ENCODE measurements at regions of chr10 and their contacts with region 1.

Region 1: DNA sequence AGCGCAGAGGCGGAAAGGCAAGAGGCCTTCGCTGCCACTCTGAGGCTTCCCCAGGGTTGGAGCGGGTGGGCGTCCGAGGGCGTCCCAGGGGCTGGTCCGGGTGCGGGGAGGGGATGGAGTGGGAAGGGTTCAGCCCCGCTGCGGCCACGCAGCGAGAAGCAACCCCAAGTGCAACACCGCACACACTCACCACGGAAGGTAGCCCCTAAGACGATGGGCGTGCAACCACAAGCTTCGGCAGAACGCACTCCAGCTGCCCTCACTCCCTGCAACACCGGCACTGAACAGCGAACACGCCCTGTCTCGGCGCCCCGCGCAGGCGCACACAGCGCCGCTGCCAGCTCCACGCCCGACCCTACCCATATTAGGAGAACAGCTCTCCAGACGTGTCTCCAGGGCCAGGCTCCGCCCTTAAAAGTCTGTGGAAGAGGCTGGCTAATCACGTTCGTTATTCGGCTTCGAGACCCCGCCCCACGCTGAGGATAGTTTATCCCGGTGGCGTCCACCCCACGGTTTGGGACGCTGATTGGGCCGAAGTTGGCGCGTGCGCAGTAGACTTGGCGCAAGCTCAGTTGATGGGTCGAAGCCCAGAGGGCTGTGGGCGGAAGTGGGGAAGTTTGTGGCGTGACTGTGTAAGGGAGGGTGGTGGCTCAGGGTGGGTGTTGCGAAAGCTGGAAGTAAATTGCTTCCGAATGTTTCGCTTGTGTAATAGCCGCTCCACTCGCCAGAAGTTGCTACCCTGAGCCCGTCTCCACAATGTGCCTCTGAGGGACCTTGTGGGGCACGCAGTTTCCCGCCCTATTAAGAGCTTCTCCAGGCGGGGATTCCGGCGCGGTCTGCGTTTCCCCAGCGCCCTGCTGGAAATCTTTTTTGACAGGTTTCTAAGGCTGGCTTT is at the start of gene RSU1:
- DNase-seq: peak; percentile 99 to 100 (median 100)
- ATAC-seq: peak; percentile 99
- H3K4me3 ChIP-seq: peak within 1 kb of the TSS; percentile 66
- H3K4me3 Mint-ChIP-seq: peak within 1 kb of the TSS; percentile 88 to 98 (median 93)
- H3K27ac ChIP-seq: peak within 1 kb of the TSS; percentile 79
- H3K27ac Mint-ChIP-seq: peak within 1 kb of the TSS; percentile 84 to 96 (median 94)
- H3K4me1 ChIP-seq: peaks cover 8 to 28% of the 10 kb centered on the region in 2 donors
- H3K4me1 Mint-ChIP-seq: peaks cover 25 to 50% (median 46%) of the 10 kb centered on the region in 7 donors
- H3K27me3 ChIP-seq: no peaks in the 10 kb centered on the region
- H3K27me3 Mint-ChIP-seq: peaks cover 0 to 15% (median 0%) of the 10 kb centered on the region in 5 donors
- total RNA-seq, gene RSU1: 36.1 to 86.7 (median 48.7) TPM

Region 2: DNA sequence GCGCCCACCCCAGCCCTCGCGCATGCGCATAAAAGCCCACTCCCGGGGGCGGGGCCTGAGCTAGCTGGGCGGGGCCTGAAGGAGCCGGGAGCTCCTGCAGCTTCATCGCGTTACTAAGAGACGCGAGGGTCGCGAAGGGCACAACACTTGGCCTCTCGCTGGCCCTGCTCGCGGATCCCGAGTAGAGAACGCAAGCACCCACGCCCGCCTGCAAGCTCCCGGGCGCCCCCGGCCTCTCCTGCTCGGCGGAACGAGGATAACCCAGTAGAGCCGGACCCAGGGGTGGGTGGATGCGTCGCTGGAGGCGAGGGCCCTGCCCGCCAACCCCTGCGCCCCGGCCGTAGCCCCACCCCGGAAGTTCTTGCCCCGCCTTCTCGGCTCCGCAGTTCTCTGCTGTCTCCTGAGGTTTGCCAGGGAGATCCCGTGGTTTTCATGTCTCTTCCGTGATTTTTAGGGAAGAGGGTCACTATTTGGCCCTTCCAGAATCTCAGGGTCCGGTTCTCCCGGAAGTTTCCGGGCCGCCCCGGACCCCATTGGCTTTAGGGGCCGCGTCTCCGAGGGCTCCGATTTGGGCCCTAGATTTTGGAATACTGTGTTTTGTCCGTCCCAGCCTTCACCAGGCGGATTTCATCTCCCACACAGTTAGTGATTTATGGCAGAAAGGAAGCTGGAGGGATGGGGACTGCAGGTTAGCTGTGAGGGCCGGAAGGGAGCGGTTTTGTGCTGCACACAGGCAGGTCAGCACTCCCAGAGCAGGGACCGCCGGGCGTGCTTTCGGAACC is 1857.9 kb before region 1 on chr10 and contains the start of gene MEIG1:
- CTCF ChIA-PET with region 1: no interaction called
- POLR2A ChIA-PET with region 1: no interaction called
- intact Hi-C with region 1: loop called in 1 of 2 experiments (anchors 10 kb)
- DNase-seq: peak; percentile 82 to 99 (median 90)
- ATAC-seq: peak; percentile 93
- H3K4me3 ChIP-seq: peak within 1 kb of the TSS; percentile 97
- H3K4me3 Mint-ChIP-seq: peak within 1 kb of the TSS; percentile 91 to 99 (median 96)
- H3K27ac ChIP-seq: peak within 1 kb of the TSS; percentile 81
- H3K27ac Mint-ChIP-seq: peak within 1 kb of the TSS; percentile 93 to 98 (median 96)
- H3K4me1 ChIP-seq: peaks cover 8 to 10% of the 10 kb centered on the region in 2 donors
- H3K4me1 Mint-ChIP-seq: peaks cover 6 to 42% (median 34%) of the 10 kb centered on the region in 7 donors
- H3K27me3 ChIP-seq: no peaks in the 10 kb centered on the region
- H3K27me3 Mint-ChIP-seq: no peaks in the 10 kb centered on the region
- total RNA-seq, gene MEIG1: 1.2 to 1.9 TPM in 2 of 5 experiments, not detected in the others

Region 3: GRCh38 chr10:15789793-15790525 is 1027.4 kb before region 1 on chr10:
- CTCF ChIA-PET with region 1: no interaction called
- POLR2A ChIA-PET with region 1: no interaction called
- intact Hi-C with region 1: no loop called
- DNase-seq: no peak
- ATAC-seq: no peak
- H3K4me3 ChIP-seq: no peak overlapping the region
- H3K4me3 Mint-ChIP-seq: no peak overlapping the region
- H3K27ac ChIP-seq: no peak overlapping the region
- H3K27ac Mint-ChIP-seq: no peak overlapping the region
- H3K4me1 ChIP-seq: no peaks in the 10 kb centered on the region
- H3K4me1 Mint-ChIP-seq: peaks cover 0 to 7% (median 0%) of the 10 kb centered on the region in 7 donors
- H3K27me3 ChIP-seq: no peaks in the 10 kb centered on the region
- H3K27me3 Mint-ChIP-seq: no peaks in the 10 kb centered on the region

Region 4: GRCh38 chr10:16436758-16437539 is 380.4 kb before region 1 on chr10 and contains the start of gene PTER:
- CTCF ChIA-PET with region 1: no interaction called
- POLR2A ChIA-PET with region 1: interaction called, 9 read pairs
- intact Hi-C with region 1: loop called (anchors 1 kb)
- DNase-seq: peak; percentile 92 to 99 (median 94)
- ATAC-seq: peak; percentile 100
- H3K4me3 ChIP-seq: peak within 1 kb of the TSS; percentile 93
- H3K4me3 Mint-ChIP-seq: peak within 1 kb of the TSS; percentile 91 to 99 (median 96)
- H3K27ac ChIP-seq: peak within 1 kb of the TSS; percentile 77
- H3K27ac Mint-ChIP-seq: peak within 1 kb of the TSS; percentile 87 to 97 (median 94)
- H3K4me1 ChIP-seq: peaks cover 13 to 28% of the 10 kb centered on the region in 2 donors
- H3K4me1 Mint-ChIP-seq: peaks cover 36 to 57% (median 48%) of the 10 kb centered on the region in 7 donors
- H3K27me3 ChIP-seq: no peaks in the 10 kb centered on the region
- H3K27me3 Mint-ChIP-seq: peaks cover 0 to 19% (median 0%) of the 10 kb centered on the region in 5 donors
- total RNA-seq, gene PTER: 12.9 to 23.7 (median 15.3) TPM

Region 5: GRCh38 chr10:16606421-16606820 is 211.0 kb before region 1 on chr10:
- CTCF ChIA-PET with region 1: no interaction called
- POLR2A ChIA-PET with region 1: no interaction called
- intact Hi-C with region 1: no loop called
- DNase-seq: no peak
- ATAC-seq: no peak
- H3K4me3 ChIP-seq: no peak overlapping the region
- H3K4me3 Mint-ChIP-seq: no peak overlapping the region
- H3K27ac ChIP-seq: no peak overlapping the region
- H3K27ac Mint-ChIP-seq: no peak overlapping the region
- H3K4me1 ChIP-seq: no peaks in the 10 kb centered on the region
- H3K4me1 Mint-ChIP-seq: peaks cover 0 to 2% (median 0%) of the 10 kb centered on the region in 7 donors
- H3K27me3 ChIP-seq: no peaks in the 10 kb centered on the region
- H3K27me3 Mint-ChIP-seq: no peaks in the 10 kb centered on the region

Region 6: GRCh38 chr10:16828114-16828568 is 10.8 kb after region 1 on chr10:
- CTCF ChIA-PET with region 1: interaction called, 13 read pairs
- POLR2A ChIA-PET with region 1: interaction called, 5 read pairs
- intact Hi-C with region 1: loop called in 1 of 2 experiments (anchors 1 kb)
- DNase-seq: peak; percentile 22 to 78 (median 69)
- ATAC-seq: peak; percentile 96
- H3K4me3 ChIP-seq: no peak overlapping the region
- H3K4me3 Mint-ChIP-seq: no peak overlapping the region
- H3K27ac ChIP-seq: no peak overlapping the region
- H3K27ac Mint-ChIP-seq: peak overlapping the region in 3 of 9 donors; percentile 63 to 84 (median 82)
- H3K4me1 ChIP-seq: no peaks in the 10 kb centered on the region
- H3K4me1 Mint-ChIP-seq: peaks cover 0 to 12% (median 8%) of the 10 kb centered on the region in 7 donors
- H3K27me3 ChIP-seq: no peaks in the 10 kb centered on the region
- H3K27me3 Mint-ChIP-seq: peaks cover 0 to 9% (median 0%) of the 10 kb centered on the region in 5 donors

Region 7: DNA sequence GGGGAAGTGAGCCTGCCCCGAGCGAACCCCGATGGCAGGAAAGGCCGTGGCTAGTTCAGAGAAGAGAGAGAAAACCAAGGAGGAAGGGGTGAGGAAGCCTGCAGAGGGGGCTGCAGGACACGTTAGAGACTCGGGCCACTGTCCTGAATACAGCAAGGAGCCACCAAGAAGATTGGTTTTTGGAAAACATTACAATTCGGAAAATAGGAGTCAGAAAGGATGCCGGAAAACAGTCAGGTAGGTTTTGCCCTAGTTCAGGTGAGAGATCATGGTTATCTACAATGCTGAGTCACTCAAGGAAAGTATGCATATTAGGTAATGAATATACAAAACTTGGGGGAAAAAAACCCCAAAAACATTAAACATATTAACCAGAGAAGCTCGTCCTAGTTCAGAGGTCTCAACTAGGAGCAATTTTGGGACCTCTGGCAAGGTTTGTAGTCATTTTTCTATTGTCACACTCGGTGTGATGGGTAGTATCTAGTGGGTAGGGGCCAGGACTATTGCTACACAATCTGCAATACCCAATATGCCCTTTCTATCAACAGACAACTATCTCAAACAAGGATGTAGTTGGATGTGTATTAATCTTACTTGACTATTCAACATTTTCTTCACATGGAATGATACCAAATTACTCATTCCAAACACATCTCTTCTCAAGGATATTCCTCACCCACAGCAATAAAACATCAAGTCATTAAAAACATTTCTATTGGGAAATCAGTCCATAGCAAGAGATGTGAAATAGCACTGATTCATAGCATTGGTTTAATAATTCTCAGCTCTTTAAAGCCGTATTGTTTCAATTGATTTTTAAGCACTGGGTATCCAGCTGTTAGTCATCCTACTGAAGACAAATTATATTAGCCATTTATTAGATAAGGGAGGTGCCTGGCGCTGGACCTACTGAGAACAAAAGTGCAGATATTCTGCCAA is 74.3 kb after region 1 on chr10:
- CTCF ChIA-PET with region 1: no interaction called
- POLR2A ChIA-PET with region 1: no interaction called
- intact Hi-C with region 1: no loop called
- DNase-seq: peak in 3 of 9 donors; percentile 7 to 18 (median 15)
- ATAC-seq: peak; percentile 69
- H3K4me3 ChIP-seq: no peak overlapping the region
- H3K4me3 Mint-ChIP-seq: peak overlapping the region; percentile 35 to 81 (median 58)
- H3K27ac ChIP-seq: no peak overlapping the region
- H3K27ac Mint-ChIP-seq: peak overlapping the region in 2 of 9 donors; percentile 40 to 49
- H3K4me1 ChIP-seq: no peaks in the 10 kb centered on the region
- H3K4me1 Mint-ChIP-seq: peaks cover 5 to 9% (median 5%) of the 10 kb centered on the region in 7 donors
- H3K27me3 ChIP-seq: no peaks in the 10 kb centered on the region
- H3K27me3 Mint-ChIP-seq: peaks cover 0 to 42% (median 0%) of the 10 kb centered on the region in 5 donors

Region 8: DNA sequence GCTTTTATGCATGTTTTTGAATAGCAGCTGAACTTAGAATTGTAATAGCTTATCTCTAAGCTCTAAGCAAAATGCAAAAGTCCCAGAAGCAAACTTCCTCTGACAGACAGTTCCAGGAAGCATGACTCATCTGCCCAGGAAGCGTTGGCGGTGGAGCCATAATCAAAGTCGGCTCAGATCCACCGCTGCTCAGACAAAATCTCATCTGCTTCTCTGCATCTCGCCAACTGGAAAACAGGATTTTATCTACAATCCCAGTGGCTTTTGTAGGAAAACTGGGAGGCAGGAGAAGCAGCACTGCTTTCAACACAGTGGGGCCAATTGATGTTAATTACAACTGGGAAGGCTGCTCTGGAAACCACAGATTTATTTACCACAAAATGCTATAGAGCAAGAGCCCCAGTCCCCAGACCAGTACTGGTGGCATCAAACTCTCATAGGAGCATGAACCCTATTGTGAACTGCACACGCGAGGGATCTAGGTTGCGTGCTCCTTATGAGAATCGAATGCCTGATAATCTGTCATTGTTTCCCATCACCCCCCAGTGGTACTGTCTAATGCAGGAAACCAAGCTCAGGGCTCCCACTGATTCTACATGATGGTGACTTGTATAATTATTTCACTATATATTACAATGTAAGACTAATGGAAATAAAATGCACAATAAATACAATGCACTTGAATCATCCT is 212.4 kb after region 1 on chr10:
- CTCF ChIA-PET with region 1: no interaction called
- POLR2A ChIA-PET with region 1: no interaction called
- intact Hi-C with region 1: loop called in 1 of 2 experiments (anchors 1 kb)
- DNase-seq: peak; percentile 31 to 82 (median 50)
- ATAC-seq: peak; percentile 69
- H3K4me3 ChIP-seq: peak overlapping the region; percentile 46
- H3K4me3 Mint-ChIP-seq: peak overlapping the region; percentile 64 to 87 (median 83)
- H3K27ac ChIP-seq: peak overlapping the region; percentile 70
- H3K27ac Mint-ChIP-seq: peak overlapping the region; percentile 75 to 97 (median 93)
- H3K4me1 ChIP-seq: peaks cover 52 to 53% of the 10 kb centered on the region in 2 donors
- H3K4me1 Mint-ChIP-seq: peaks cover 33 to 88% (median 81%) of the 10 kb centered on the region in 7 donors
- H3K27me3 ChIP-seq: no peaks in the 10 kb centered on the region
- H3K27me3 Mint-ChIP-seq: peaks cover 0 to 7% (median 0%) of the 10 kb centered on the region in 5 donors

Region 9: DNA sequence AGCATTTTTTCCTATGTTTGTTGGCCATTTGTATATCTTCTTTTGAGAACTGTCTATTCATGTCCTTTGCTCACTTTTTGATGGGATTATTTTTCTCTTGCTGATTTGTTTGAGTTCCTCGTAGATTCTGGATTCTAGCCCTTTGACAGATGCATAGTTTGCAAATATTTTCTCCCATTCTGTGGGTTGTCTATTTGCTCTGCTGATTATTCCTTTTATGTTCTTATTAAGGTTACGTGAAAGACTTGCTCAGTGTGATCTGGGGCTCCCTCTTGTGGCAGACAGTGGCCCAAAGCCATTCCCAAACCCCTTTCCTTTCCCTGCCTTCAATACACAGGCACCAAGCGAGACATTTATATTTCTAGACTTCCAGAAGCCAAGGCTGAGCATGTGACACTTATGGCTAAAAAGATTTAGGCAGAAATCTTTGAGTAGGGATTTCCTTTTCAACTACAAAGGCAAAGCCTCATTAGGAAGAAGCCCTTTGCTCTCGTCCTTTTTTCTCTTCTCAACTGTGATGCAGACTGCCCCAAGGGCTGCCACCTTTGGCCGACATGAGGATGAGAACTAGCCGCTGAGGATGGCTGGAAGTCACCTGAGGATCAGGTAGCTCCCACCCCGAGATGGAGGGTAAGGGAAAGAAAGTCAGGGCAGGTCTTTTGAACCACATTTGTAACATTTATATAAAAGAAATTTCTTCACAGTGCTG is 613.4 kb after region 1 on chr10:
- CTCF ChIA-PET with region 1: interaction called, 3 read pairs
- POLR2A ChIA-PET with region 1: interaction called, 5 read pairs
- intact Hi-C with region 1: loop called (anchors 1 to 2 kb)
- DNase-seq: peak in 8 of 9 donors; percentile 44 to 68 (median 60)
- ATAC-seq: peak; percentile 43
- H3K4me3 ChIP-seq: no peak overlapping the region
- H3K4me3 Mint-ChIP-seq: peak overlapping the region in 9 of 10 donors; percentile 11 to 81 (median 42)
- H3K27ac ChIP-seq: no peak overlapping the region
- H3K27ac Mint-ChIP-seq: peak overlapping the region in 8 of 9 donors; percentile 20 to 97 (median 90)
- H3K4me1 ChIP-seq: peaks cover 37 to 43% of the 10 kb centered on the region in 2 donors
- H3K4me1 Mint-ChIP-seq: peaks cover 43 to 58% (median 53%) of the 10 kb centered on the region in 7 donors
- H3K27me3 ChIP-seq: no peaks in the 10 kb centered on the region
- H3K27me3 Mint-ChIP-seq: peaks cover 0 to 24% (median 0%) of the 10 kb centered on the region in 5 donors

Region 10: GRCh38 chr10:17633353-17633752 is 816.0 kb after region 1 on chr10:
- CTCF ChIA-PET with region 1: no interaction called
- POLR2A ChIA-PET with region 1: no interaction called
- intact Hi-C with region 1: no loop called
- DNase-seq: no peak
- ATAC-seq: no peak
- H3K4me3 ChIP-seq: no peak overlapping the region
- H3K4me3 Mint-ChIP-seq: no peak overlapping the region
- H3K27ac ChIP-seq: no peak overlapping the region
- H3K27ac Mint-ChIP-seq: no peak overlapping the region
- H3K4me1 ChIP-seq: no peaks in the 10 kb centered on the region
- H3K4me1 Mint-ChIP-seq: peaks cover 0 to 2% (median 0%) of the 10 kb centered on the region in 7 donors
- H3K27me3 ChIP-seq: no peaks in the 10 kb centered on the region
- H3K27me3 Mint-ChIP-seq: peaks cover 0 to 21% (median 0%) of the 10 kb centered on the region in 5 donors

Region 11: GRCh38 chr10:18659120-18659818 is 1841.9 kb after region 1 on chr10 and contains the start of gene ARL5B:
- CTCF ChIA-PET with region 1: no interaction called
- POLR2A ChIA-PET with region 1: no interaction called
- intact Hi-C with region 1: loop called (anchors 2 to 5 kb)
- DNase-seq: peak; percentile 82 to 97 (median 93)
- ATAC-seq: peak; percentile 98
- H3K4me3 ChIP-seq: peak within 1 kb of the TSS; percentile 89
- H3K4me3 Mint-ChIP-seq: peak within 1 kb of the TSS; percentile 94 to 100 (median 99)
- H3K27ac ChIP-seq: peak within 1 kb of the TSS; percentile 92
- H3K27ac Mint-ChIP-seq: peak within 1 kb of the TSS; percentile 95 to 99 (median 99)
- H3K4me1 ChIP-seq: peaks cover 16 to 21% of the 10 kb centered on the region in 2 donors
- H3K4me1 Mint-ChIP-seq: peaks cover 28 to 56% (median 44%) of the 10 kb centered on the region in 7 donors
- H3K27me3 ChIP-seq: no peaks in the 10 kb centered on the region
- H3K27me3 Mint-ChIP-seq: no peaks in the 10 kb centered on the region
- total RNA-seq, gene ARL5B: 9.7 to 15.8 (median 13.9) TPM

Measured in naive thymus-derived CD4-positive, alpha-beta T cell (primary cell).